Prostate gland (tissue), 2 donors: ENCODE measurements at regions of chr5 and their contacts with region 1.

Region 1: DNA sequence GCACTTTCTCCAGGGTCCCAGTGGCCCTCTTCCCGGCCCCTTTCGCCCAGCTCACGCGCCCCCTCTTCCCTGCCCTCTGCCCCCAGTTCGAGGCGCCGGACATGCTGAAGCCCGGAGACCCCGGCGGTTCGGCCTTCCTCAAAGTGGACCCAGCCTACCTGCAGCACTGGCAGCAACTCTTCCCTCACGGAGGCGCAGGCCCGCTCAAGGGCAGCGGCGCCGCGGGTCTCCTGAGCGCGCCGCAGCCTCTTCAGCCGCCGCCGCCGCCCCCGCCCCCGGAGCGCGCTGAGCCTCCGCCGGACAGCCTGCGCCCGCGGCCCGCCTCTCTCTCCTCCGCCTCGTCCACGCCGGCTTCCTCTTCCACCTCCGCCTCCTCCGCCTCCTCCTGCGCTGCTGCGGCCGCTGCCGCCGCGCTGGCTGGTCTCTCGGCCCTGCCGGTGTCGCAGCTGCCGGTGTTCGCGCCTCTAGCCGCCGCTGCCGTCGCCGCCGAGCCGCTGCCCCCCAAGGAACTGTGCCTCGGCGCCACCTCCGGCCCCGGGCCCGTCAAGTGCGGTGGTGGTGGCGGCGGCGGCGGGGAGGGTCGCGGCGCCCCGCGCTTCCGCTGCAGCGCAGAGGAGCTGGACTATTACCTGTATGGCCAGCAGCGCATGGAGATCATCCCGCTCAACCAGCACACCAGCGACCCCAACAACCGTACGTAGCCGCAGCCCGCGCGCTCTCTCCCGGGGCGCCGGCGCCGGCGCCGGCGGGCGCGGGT is 1.1 kb downstream of the PRDM6 start:
- DNase-seq: no peak
- H3K4me3 ChIP-seq: peak overlapping the region; percentile 40
- H3K27ac ChIP-seq: peak overlapping the region in 1 of 2 donors; percentile 28
- H3K4me1 ChIP-seq: no peaks in the 10 kb centered on the region
- H3K27me3 ChIP-seq: peaks cover 48% of the 10 kb centered on the region
- CTCF ChIP-seq: no peak
- POLR2A ChIP-seq: no peak

Region 2: GRCh38 chr5:122845229-122846050 is 244.7 kb before region 1 on chr5 and contains the start of gene SNX24:
- intact Hi-C with region 1: loop called (anchors 10 kb)
- DNase-seq: peak; percentile 71
- H3K4me3 ChIP-seq: peak within 1 kb of the TSS; percentile 90 to 94
- H3K27ac ChIP-seq: peak within 1 kb of the TSS; percentile 81 to 90
- H3K4me1 ChIP-seq: no peaks in the 10 kb centered on the region
- H3K27me3 ChIP-seq: no peaks in the 10 kb centered on the region
- CTCF ChIP-seq: peak in 1 of 4 experiments; percentile 3
- POLR2A ChIP-seq: peak; percentile 9
- total RNA-seq, gene SNX24: 9.8 to 13.3 TPM

Region 3: DNA sequence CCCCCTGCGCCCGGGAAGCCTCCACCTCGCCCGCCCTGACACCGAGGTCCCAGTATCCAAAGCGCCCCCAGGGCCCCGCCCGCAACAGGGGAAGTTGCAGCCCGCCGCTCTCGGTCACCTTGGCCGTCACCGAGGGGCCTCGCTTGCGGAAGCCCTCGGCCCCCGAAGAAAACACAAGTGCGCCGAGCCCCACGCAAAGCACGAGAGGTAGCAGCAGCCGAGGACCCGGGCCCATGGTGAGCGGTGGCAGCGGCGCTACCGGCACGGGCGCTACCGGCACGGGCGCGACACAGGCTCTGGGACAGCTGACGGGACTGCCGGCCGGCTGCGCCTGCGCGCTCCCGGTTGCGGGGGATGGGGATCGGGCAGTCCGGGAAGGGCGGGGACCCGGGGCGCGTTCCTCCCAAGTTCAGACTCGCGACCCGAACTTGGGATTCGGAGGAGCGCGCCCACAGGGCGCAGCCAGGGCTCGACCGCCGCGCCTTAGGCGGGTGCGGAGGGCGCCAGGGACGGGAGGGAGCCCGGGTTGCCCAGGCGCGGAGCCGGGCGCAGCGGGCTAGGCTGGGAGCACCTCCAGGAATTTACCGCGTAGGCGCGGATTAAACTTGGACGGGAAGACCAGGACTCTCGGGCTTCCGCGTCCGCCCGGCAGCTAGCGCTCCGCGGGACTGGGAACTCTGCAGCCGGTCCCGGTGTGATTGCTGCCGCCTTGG is 53.5 kb before region 1 on chr5 and contains the start of gene PPIC:
- intact Hi-C with region 1: loop called (anchors 5 kb)
- DNase-seq: peak; percentile 83
- H3K4me3 ChIP-seq: peak within 1 kb of the TSS; percentile 74 to 86
- H3K27ac ChIP-seq: peak within 1 kb of the TSS; percentile 83 to 91
- H3K4me1 ChIP-seq: no peaks in the 10 kb centered on the region
- H3K27me3 ChIP-seq: no peaks in the 10 kb centered on the region
- CTCF ChIP-seq: no peak
- POLR2A ChIP-seq: peak; percentile 59
- total RNA-seq, gene PPIC: 11.5 to 20.9 TPM

Region 4: GRCh38 chr5:123285122-123286023 is 195.3 kb after region 1 on chr5:
- intact Hi-C with region 1: loop called (anchors 5 kb)
- DNase-seq: no peak
- H3K4me3 ChIP-seq: no peak overlapping the region
- H3K27ac ChIP-seq: no peak overlapping the region
- H3K4me1 ChIP-seq: no peaks in the 10 kb centered on the region
- H3K27me3 ChIP-seq: no peaks in the 10 kb centered on the region
- CTCF ChIP-seq: no peak
- POLR2A ChIP-seq: no peak

Region 5: GRCh38 chr5:123303802-123304201 is 213.7 kb after region 1 on chr5:
- intact Hi-C with region 1: no loop called
- DNase-seq: no peak
- H3K4me3 ChIP-seq: no peak overlapping the region
- H3K27ac ChIP-seq: no peak overlapping the region
- H3K4me1 ChIP-seq: no peaks in the 10 kb centered on the region
- H3K27me3 ChIP-seq: no peaks in the 10 kb centered on the region
- CTCF ChIP-seq: no peak
- POLR2A ChIP-seq: no peak